A673 (cell line): ENCODE measurements at regions of chr7 and their contacts with region 1.

Region 1: DNA sequence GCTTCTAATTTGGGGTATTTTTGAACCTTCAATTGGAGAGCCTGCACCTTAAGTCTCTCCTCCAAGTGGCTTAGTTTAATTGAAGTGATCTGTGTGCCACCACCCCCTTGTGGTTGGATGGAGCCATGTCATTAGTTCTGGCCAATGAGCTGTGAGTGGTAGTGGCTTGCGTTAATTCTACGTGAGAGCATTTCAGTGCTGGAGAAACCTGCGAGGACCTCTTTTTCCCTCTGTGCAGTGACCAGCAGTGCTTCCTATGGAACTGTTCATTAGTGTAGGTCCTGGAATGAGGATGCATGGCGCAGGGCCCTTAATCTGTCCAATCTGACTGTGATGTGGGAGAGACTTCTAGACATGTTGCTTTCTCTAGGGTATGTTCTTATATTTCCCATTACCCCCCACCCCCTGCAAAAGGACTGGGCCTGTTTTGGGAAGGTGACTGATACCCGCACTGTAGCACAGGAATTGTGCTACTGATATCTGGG is 3.8 kb downstream of the HILPDA start:
- DNase-seq: peak; percentile 84
- H3K4me3 ChIP-seq: no peak overlapping the region
- H3K27ac ChIP-seq: no peak overlapping the region
- H3K4me1 ChIP-seq: peaks cover 25% of the 10 kb centered on the region
- H3K27me3 ChIP-seq: no peaks in the 10 kb centered on the region
- CTCF ChIP-seq: peak; percentile 79

Region 2: DNA sequence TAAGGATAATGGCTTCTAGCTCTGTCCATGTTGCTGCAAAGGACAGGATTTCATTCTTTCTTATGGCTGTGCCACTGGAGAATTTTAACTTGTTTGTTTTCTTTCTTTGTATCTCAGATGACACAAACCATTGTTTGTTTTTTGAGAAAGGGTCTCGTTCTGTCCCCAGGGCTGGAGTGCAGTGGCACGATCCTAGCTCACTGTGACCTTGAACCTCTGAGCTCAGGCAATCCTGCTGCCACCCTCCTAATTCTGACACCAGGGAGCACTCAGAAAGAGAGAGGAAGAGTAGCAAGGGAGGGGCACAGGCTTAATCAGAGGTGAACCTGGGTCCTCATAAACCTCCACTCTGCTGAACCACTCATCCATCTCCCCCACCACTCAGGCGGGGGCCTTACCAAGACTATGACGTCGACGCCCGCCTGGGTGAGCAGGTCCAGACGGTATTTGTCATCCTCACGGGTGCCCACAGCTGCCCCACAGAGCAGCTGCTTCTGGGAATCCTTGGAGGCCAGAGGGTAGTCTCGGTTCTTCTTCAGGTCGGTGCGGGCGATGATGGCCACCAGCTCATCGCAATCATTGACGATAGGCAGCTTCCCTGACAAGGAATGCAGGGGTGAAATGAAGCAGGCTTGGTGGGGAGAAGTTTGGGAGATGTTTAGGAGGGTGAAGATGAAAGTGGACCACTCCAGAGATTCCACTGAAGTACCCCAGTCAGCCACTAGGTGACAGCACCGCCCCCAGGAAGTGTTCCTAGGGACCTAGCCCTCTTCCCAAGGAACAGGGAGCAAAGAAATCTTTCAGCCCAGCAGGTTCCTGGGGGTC is 61.2 kb before region 1 on chr7:
- CTCF ChIA-PET with region 1: interaction called, 3 read pairs
- POLR2A ChIA-PET with region 1: no interaction called
- intact Hi-C with region 1: loop called (anchors 2 kb)
- DNase-seq: peak; percentile 70
- H3K4me3 ChIP-seq: no peak overlapping the region
- H3K27ac ChIP-seq: no peak overlapping the region
- H3K4me1 ChIP-seq: no peaks in the 10 kb centered on the region
- H3K27me3 ChIP-seq: no peaks in the 10 kb centered on the region
- CTCF ChIP-seq: peak; percentile 85

Region 3: GRCh38 chr7:130254555-130254954 is 1795.1 kb after region 1 on chr7:
- CTCF ChIA-PET with region 1: no interaction called
- POLR2A ChIA-PET with region 1: no interaction called
- intact Hi-C with region 1: no loop called
- DNase-seq: no peak
- H3K4me3 ChIP-seq: no peak overlapping the region
- H3K27ac ChIP-seq: no peak overlapping the region
- H3K4me1 ChIP-seq: no peaks in the 10 kb centered on the region
- H3K27me3 ChIP-seq: no peaks in the 10 kb centered on the region
- CTCF ChIP-seq: no peak